ENCODE measurements at regions of chr12 and their contacts with region 1.

Region 1: DNA sequence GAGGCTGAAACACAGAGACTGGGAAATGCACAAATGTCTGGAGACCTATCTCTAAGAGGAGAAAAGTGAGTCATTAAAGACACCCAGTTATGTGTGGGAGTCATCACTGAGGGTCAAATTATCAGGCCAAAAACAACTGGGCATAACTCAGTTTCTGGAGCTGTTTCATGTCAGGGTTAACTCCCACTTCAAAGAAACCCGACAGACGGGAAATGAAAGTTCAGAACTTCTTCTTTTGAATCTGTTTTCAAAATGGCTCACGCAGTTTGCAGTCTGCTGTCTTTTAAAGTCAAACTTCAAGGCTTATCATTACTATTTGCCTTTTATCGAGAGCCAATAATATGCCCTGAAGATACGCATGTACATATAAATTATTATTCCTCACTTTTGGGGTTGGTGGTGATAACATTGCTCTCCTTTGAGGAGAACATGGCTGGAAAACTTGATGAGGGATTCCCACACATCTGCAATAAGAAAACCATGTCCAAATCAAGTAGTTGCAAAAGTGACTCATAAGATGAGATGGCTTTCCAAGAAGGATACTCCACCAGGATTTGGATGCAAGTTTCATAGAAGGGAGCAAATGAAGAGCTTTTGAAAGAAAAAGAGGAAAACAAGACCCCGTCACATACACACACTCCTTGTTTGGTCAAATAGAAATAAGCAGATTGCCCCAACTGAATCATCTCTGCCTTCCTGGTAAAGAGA is 341.4 kb downstream of the ADAMTS20 start:
- DNase-seq: peak; percentile 57
- ATAC-seq: peak; percentile 99
- H3K4me3 ChIP-seq: no peak overlapping the region
- H3K27ac ChIP-seq: no peak overlapping the region
- H3K4me1 ChIP-seq: peaks cover 9% of the 10 kb centered on the region; the same call in 1 of the 2 replicates
- H3K27me3 ChIP-seq: no peaks in the 10 kb centered on the region
- CTCF ChIP-seq: no peak
- EP300 ChIP-seq: peak; percentile 69 to 74; a peak in 2 of 4 replicates
- POLR2A ChIP-seq: no peak
- RAD21 ChIP-seq: no peak

Region 2: DNA sequence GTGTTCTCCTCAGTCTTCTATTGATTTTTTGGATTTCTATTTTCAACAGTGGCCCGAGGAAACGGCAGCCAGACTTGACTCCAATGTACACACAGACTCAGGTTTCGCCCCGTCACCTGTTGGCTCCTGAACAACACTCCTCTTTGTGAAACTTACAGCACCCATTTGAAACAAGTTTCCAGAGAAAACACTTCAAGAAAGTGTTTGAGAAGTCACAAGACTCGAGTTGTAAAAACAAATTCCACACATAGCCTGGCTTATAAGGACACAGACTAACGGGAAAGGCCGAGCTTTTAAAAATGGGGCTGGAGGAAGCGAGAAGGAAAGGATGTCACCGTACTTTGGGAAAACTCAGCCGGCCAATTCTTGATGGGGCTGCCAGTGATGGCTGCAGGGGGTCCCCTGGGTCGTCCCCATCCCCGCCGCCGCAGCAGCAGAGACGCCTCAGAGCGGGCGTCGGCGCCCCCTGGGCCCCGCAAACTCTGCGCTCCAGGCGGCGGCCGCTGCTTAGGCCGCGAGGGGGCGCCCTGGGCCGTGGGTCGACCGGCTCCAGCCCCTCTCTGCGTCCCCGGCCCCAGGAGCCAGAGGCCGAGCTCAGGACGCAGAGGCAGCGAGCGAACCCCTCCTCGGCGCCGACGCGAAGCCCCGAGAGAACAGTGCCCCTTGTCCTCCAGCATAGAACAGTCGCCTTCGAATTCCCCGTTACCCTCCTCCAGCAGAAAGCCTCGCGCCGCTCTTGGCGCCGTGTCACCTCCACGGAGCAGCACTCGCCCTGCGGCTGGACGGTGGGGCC is 728.0 kb before region 1 on chr12:
- CTCF ChIA-PET with region 1: interaction called, 5 read pairs
- POLR2A ChIA-PET with region 1: no interaction called
- RAD21 ChIA-PET with region 1: no interaction called
- SMC1A ChIA-PET with region 1: no interaction called
- in situ Hi-C with region 1: no loop called
- intact Hi-C with region 1: loop called (anchors 5 kb)
- DNase-seq: no peak
- ATAC-seq: peak; percentile 95
- H3K4me3 ChIP-seq: peak overlapping the region; percentile 73
- H3K27ac ChIP-seq: no peak overlapping the region
- H3K4me1 ChIP-seq: peaks cover 9% of the 10 kb centered on the region
- H3K27me3 ChIP-seq: peaks cover 0 to 6% of the 10 kb centered on the region in 2 experiments; a peak in 1 of 4 replicates
- CTCF ChIP-seq: peak; percentile 79 to 96 (median 82)
- EP300 ChIP-seq: no peak
- POLR2A ChIP-seq: no peak
- RAD21 ChIP-seq: peak; percentile 85

Region 3: GRCh38 chr12:42759622-42760273 is 450.9 kb before region 1 on chr12:
- CTCF ChIA-PET with region 1: no interaction called
- POLR2A ChIA-PET with region 1: no interaction called
- RAD21 ChIA-PET with region 1: no interaction called
- SMC1A ChIA-PET with region 1: no interaction called
- in situ Hi-C with region 1: no loop called
- intact Hi-C with region 1: loop called (anchors 10 kb)
- DNase-seq: no peak
- ATAC-seq: no peak
- H3K4me3 ChIP-seq: no peak overlapping the region
- H3K27ac ChIP-seq: no peak overlapping the region
- H3K4me1 ChIP-seq: peaks cover 24% of the 10 kb centered on the region
- H3K27me3 ChIP-seq: no peaks in the 10 kb centered on the region
- CTCF ChIP-seq: no peak
- EP300 ChIP-seq: no peak
- POLR2A ChIP-seq: no peak
- RAD21 ChIP-seq: no peak

Region 4: DNA sequence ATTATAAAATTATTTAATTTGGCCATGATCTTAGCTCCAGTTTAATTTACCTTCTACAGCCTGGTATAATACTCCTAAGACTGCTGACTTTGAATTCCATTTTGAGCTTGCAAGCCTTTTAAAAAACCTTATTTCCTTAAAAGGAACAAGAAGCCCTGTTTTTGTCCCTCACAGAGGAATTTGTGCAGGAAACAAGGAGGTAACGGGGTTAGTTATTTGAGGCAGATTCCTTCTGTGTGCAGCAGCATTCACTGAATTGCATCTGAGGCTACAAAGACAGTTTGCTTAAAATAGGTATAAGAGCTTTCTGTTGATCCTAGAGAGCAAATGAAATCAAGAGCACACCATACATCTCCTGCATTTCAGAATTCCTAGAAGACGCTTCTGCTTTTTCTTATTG is 217.8 kb before region 1 on chr12:
- CTCF ChIA-PET with region 1: no interaction called
- POLR2A ChIA-PET with region 1: no interaction called
- RAD21 ChIA-PET with region 1: no interaction called
- SMC1A ChIA-PET with region 1: no interaction called
- in situ Hi-C with region 1: no loop called
- intact Hi-C with region 1: no loop called
- DNase-seq: no peak
- ATAC-seq: no peak
- H3K4me3 ChIP-seq: no peak overlapping the region
- H3K27ac ChIP-seq: no peak overlapping the region
- H3K4me1 ChIP-seq: no peaks in the 10 kb centered on the region
- H3K27me3 ChIP-seq: no peaks in the 10 kb centered on the region
- CTCF ChIP-seq: no peak
- EP300 ChIP-seq: no peak
- POLR2A ChIP-seq: no peak
- RAD21 ChIP-seq: no peak

Region 5: GRCh38 chr12:43099691-43100163 is 110.9 kb before region 1 on chr12:
- CTCF ChIA-PET with region 1: no interaction called
- POLR2A ChIA-PET with region 1: no interaction called
- RAD21 ChIA-PET with region 1: no interaction called
- SMC1A ChIA-PET with region 1: no interaction called
- in situ Hi-C with region 1: no loop called
- intact Hi-C with region 1: no loop called
- DNase-seq: no peak
- ATAC-seq: no peak
- H3K4me3 ChIP-seq: no peak overlapping the region
- H3K27ac ChIP-seq: no peak overlapping the region
- H3K4me1 ChIP-seq: no peaks in the 10 kb centered on the region
- H3K27me3 ChIP-seq: no peaks in the 10 kb centered on the region
- CTCF ChIP-seq: no peak
- EP300 ChIP-seq: no peak
- POLR2A ChIP-seq: no peak
- RAD21 ChIP-seq: no peak

Region 6: DNA sequence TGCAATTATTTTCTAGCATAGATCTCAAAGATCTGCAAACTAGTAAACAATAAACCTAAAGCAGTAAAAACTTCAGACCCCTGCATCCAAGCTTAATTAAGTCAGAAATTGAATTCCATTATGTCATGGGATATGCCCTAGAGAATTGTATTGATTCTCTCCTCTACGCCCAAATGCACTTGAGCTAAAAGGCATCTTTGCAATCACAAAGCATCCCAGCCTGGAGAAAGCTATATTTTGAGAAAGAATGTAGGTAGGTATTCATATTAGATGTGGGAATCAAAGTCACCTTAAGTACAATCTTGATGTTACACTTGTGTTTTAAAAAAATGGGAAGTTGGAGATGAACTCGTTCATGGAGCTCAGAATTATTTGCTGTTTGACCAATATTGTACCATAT is 45.3 kb before region 1 on chr12:
- CTCF ChIA-PET with region 1: interaction called, 3 read pairs
- POLR2A ChIA-PET with region 1: interaction called, 3 read pairs
- RAD21 ChIA-PET with region 1: no interaction called
- SMC1A ChIA-PET with region 1: interaction called, 11 read pairs
- in situ Hi-C with region 1: no loop called
- intact Hi-C with region 1: no loop called
- DNase-seq: no peak
- ATAC-seq: no peak
- H3K4me3 ChIP-seq: no peak overlapping the region
- H3K27ac ChIP-seq: no peak overlapping the region
- H3K4me1 ChIP-seq: no peaks in the 10 kb centered on the region
- H3K27me3 ChIP-seq: no peaks in the 10 kb centered on the region
- CTCF ChIP-seq: no peak
- EP300 ChIP-seq: no peak
- POLR2A ChIP-seq: no peak
- RAD21 ChIP-seq: no peak

Region 7: DNA sequence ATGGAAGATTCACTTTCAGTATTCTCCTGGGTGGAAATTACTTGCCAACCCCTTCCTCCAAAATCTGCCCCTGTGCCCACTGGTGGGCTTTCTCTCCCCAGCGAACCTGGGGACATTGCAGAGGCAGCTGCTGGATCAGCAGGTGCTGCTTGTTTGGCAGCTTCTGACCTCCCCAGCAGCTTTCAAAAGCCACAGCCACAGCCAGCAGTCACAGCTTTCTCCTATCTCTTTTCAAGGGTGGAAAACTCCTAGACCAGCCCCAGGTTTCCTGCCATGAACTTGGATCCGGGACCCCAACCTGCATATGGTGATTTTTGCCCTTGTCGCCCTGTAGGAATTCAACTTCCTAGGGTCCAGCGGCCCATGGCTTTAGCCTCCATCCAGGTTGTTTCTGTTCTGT is 10.6 kb after region 1 on chr12:
- CTCF ChIA-PET with region 1: interaction called, 10 read pairs
- POLR2A ChIA-PET with region 1: no interaction called
- RAD21 ChIA-PET with region 1: interaction called, 3 read pairs
- SMC1A ChIA-PET with region 1: interaction called, 8 read pairs
- in situ Hi-C with region 1: no loop called
- intact Hi-C with region 1: no loop called
- DNase-seq: no peak
- ATAC-seq: no peak
- H3K4me3 ChIP-seq: no peak overlapping the region
- H3K27ac ChIP-seq: no peak overlapping the region
- H3K4me1 ChIP-seq: no peaks in the 10 kb centered on the region
- H3K27me3 ChIP-seq: no peaks in the 10 kb centered on the region
- CTCF ChIP-seq: no peak
- EP300 ChIP-seq: no peak
- POLR2A ChIP-seq: no peak
- RAD21 ChIP-seq: no peak

Region 8: GRCh38 chr12:43267818-43268217 is 57.2 kb after region 1 on chr12:
- CTCF ChIA-PET with region 1: no interaction called
- POLR2A ChIA-PET with region 1: interaction called, 4 read pairs
- RAD21 ChIA-PET with region 1: interaction called, 5 read pairs
- SMC1A ChIA-PET with region 1: interaction called, 12 read pairs
- in situ Hi-C with region 1: no loop called
- intact Hi-C with region 1: no loop called
- DNase-seq: no peak
- ATAC-seq: no peak
- H3K4me3 ChIP-seq: no peak overlapping the region
- H3K27ac ChIP-seq: no peak overlapping the region
- H3K4me1 ChIP-seq: no peaks in the 10 kb centered on the region
- H3K27me3 ChIP-seq: no peaks in the 10 kb centered on the region
- CTCF ChIP-seq: no peak
- EP300 ChIP-seq: no peak
- POLR2A ChIP-seq: no peak
- RAD21 ChIP-seq: no peak

Measured in GM12878 (cell line).